PC-3 (cell line): ENCODE measurements at regions of chr10 and their contacts with region 1.

Region 1: GRCh38 chr10:35752469-35753450 is 110.7 kb upstream of the FZD8 start:
- DNase-seq: no peak
- ATAC-seq: no peak
- H3K4me3 ChIP-seq: no peak overlapping the region
- H3K27ac ChIP-seq: no peak overlapping the region
- H3K4me1 ChIP-seq: no peaks in the 10 kb centered on the region
- H3K27me3 ChIP-seq: no peaks in the 10 kb centered on the region
- CTCF ChIP-seq: no peak

Region 2: DNA sequence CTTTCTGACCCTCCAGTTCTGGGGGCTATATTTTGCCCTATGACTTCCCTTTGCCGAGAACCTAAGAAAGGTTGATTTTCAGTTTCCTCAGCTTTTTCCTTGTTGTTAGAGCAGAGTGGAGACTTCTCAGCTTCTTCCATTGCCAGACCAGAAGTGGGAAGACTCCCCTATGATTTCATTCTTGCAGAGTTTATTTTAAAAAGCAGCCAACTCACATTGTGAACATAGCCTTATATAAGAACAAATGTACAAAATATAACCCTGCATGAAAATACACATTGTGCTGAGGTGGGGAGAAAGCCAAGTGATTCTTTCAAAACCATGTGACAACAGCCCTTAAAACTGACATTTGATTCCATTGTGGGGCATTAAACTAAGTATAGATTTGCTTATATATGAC is 76.9 kb before region 1 on chr10:
- CTCF ChIA-PET with region 1: no interaction called
- POLR2A ChIA-PET with region 1: interaction called, 14 read pairs
- intact Hi-C with region 1: no loop called
- DNase-seq: no peak
- ATAC-seq: no peak
- H3K4me3 ChIP-seq: no peak overlapping the region
- H3K27ac ChIP-seq: no peak overlapping the region
- H3K4me1 ChIP-seq: no peaks in the 10 kb centered on the region
- H3K27me3 ChIP-seq: no peaks in the 10 kb centered on the region
- CTCF ChIP-seq: no peak